ENCODE measurements at regions of chr16 and their contacts with region 1.

Region 1: DNA sequence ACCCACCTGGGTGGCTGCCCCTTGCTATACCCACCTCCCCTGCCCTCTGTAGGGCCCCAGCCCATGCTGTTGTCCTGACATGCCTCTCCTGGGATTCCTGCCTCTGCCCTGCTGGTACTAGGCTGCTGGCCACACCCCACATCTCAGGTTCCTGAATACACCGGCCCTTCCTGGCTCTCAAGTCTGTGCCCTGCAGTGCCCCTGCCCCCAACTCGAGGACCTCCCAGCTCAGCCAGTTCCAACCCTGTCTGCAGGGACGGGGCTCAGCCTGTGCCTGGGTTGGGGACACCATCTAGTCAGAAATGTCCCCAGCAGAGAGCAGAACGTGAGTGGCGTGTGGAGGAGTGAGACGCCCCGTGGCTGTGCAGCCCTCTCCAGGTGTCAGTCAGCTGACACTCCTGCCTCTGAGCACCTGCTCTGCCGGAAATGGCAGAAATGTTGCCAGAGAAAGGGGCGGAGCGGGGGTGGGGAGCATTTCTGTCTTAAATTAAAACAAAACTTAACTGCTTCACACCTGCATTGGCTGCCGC is 28.7 kb downstream of the ACSF3 start:
- DNase-seq: peak; percentile 43 to 90 (median 76)
- ATAC-seq: peak; percentile 97
- H3K4me3 ChIP-seq: peak overlapping the region in 1 of 2 experiments; percentile 32
- H3K4me3 Mint-ChIP-seq: peak overlapping the region; percentile 53
- H3K27ac ChIP-seq: peak overlapping the region in 1 of 2 experiments; percentile 21
- H3K27ac Mint-ChIP-seq: peak overlapping the region; percentile 94
- H3K4me1 ChIP-seq: peaks cover 27% of the 10 kb centered on the region
- H3K4me1 Mint-ChIP-seq: peaks cover 33% of the 10 kb centered on the region
- H3K27me3 ChIP-seq: no peaks in the 10 kb centered on the region
- H3K27me3 Mint-ChIP-seq: no peaks in the 10 kb centered on the region
- CTCF ChIP-seq: no peak

Region 2: GRCh38 chr16:89060207-89060794 is 62.1 kb before region 1 on chr16:
- CTCF ChIA-PET with region 1: no interaction called
- POLR2A ChIA-PET with region 1: no interaction called
- intact Hi-C with region 1: no loop called
- DNase-seq: peak in 2 of 9 experiments; percentile 20 to 38
- ATAC-seq: no peak
- H3K4me3 ChIP-seq: no peak overlapping the region
- H3K4me3 Mint-ChIP-seq: no peak overlapping the region
- H3K27ac ChIP-seq: no peak overlapping the region
- H3K27ac Mint-ChIP-seq: no peak overlapping the region
- H3K4me1 ChIP-seq: no peaks in the 10 kb centered on the region
- H3K4me1 Mint-ChIP-seq: no peaks in the 10 kb centered on the region
- H3K27me3 ChIP-seq: no peaks in the 10 kb centered on the region
- H3K27me3 Mint-ChIP-seq: no peaks in the 10 kb centered on the region
- CTCF ChIP-seq: no peak

Region 3: GRCh38 chr16:89093602-89094251 is 28.7 kb before region 1 on chr16 and contains the start of gene ACSF3:
- CTCF ChIA-PET with region 1: interaction called, 6 read pairs
- POLR2A ChIA-PET with region 1: interaction called, 4 read pairs
- intact Hi-C with region 1: loop called (anchors 1 kb)
- DNase-seq: peak; percentile 30 to 86 (median 65)
- ATAC-seq: peak; percentile 10
- H3K4me3 ChIP-seq: peak within 1 kb of the TSS; percentile 66 to 74
- H3K4me3 Mint-ChIP-seq: peak within 1 kb of the TSS; percentile 94
- H3K27ac ChIP-seq: peak within 1 kb of the TSS; percentile 58 to 66
- H3K27ac Mint-ChIP-seq: peak within 1 kb of the TSS; percentile 97
- H3K4me1 ChIP-seq: peaks cover 49% of the 10 kb centered on the region
- H3K4me1 Mint-ChIP-seq: peaks cover 51% of the 10 kb centered on the region
- H3K27me3 ChIP-seq: no peaks in the 10 kb centered on the region
- H3K27me3 Mint-ChIP-seq: peaks cover 13% of the 10 kb centered on the region
- CTCF ChIP-seq: no peak
- total RNA-seq, gene ACSF3: 33.5 to 37.0 TPM

Region 4: DNA sequence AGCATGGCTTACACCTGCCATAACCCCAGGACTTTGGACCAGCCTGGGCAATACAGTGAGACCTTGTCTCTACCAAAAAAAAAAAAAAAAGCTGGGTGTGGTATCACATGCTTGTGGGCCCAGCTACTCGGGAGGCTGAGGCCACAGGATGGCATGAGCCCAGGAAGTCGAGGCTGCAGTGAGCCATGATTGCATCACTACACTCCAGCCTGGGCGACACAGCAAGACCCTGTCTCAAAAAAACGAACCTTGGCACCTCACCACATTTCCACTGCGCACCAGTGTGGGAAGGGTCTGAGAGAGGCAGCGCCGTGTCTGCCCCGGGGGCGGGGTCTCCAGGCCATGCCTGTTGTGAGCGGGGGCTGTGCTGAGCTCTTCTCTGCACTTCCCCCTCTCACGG is 22.5 kb before region 1 on chr16:
- CTCF ChIA-PET with region 1: interaction called, 6 read pairs
- POLR2A ChIA-PET with region 1: interaction called, 4 read pairs
- intact Hi-C with region 1: loop called in 1 of 2 experiments (anchors 1 kb)
- DNase-seq: peak in 3 of 9 experiments; percentile 17 to 61 (median 60)
- ATAC-seq: no peak
- H3K4me3 ChIP-seq: no peak overlapping the region
- H3K4me3 Mint-ChIP-seq: no peak overlapping the region
- H3K27ac ChIP-seq: no peak overlapping the region
- H3K27ac Mint-ChIP-seq: peak overlapping the region; percentile 71
- H3K4me1 ChIP-seq: peaks cover 66% of the 10 kb centered on the region
- H3K4me1 Mint-ChIP-seq: peaks cover 55% of the 10 kb centered on the region
- H3K27me3 ChIP-seq: no peaks in the 10 kb centered on the region
- H3K27me3 Mint-ChIP-seq: no peaks in the 10 kb centered on the region
- CTCF ChIP-seq: no peak

Measured in CD8-positive, alpha-beta T cell (primary cell).